Right ventricle myocardium superior (tissue), 1 donor: ENCODE measurements at regions of chr5 and their contacts with region 1.

Region 1: GRCh38 chr5:15995341-15996052 is 184.1 kb downstream of the MARCHF11 start:
- DNase-seq: no peak
- ATAC-seq: peak; percentile 82

Region 2: DNA sequence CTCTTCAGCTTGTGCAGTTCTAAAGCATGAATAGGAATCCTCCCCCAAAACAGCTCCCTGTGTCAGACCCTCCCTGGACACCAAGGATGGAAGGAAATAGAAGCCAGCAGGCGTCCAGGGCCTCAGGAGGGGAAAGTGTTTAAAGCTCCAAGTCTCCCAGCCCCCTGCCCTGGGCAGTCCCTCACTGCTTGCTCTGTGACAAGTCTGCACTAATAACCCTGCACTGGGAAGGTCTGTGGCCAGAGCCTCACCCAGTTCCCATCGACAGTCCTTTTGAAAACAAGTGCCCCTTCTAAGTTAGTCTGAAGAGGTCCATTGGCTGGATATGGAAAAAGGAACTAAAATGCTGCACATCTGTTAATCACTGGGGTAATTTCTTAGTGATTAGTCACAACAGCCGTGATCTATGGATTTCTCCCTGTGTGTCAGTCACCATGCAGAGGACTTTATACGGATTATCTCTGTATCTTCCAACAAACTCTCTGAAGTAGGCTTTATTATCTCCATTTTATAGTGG is 300.2 kb before region 1 on chr5:
- intact Hi-C with region 1: no loop called
- DNase-seq: no peak
- ATAC-seq: peak; percentile 51

Region 3: DNA sequence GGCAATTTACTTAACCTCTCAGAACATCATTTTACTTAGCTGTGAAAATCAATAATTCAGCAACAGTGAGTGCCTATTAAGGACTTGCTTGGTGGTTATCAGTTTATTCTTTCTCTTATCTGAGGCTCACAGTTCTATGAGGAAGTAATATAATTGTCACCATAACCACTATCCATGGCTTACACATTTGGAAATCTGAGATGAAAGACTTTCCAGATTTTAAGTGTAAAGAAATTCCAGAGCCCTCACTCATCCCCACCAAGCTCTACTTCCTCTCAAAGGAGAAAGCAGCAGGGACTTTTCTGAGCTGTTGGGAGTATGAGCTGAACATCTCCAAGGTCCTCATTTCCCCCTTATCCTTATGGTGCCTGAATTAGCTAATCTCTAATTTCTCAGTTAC is 174.0 kb before region 1 on chr5:
- intact Hi-C with region 1: loop called (anchors 10 kb)
- DNase-seq: no peak
- ATAC-seq: no peak

Region 4: GRCh38 chr5:16051246-16051755 is 55.8 kb after region 1 on chr5:
- intact Hi-C with region 1: no loop called
- DNase-seq: no peak
- ATAC-seq: peak; percentile 68

Region 5: GRCh38 chr5:16108418-16108817 is 112.9 kb after region 1 on chr5:
- intact Hi-C with region 1: no loop called
- DNase-seq: no peak
- ATAC-seq: no peak

Region 6: GRCh38 chr5:16152601-16153568 is 157.4 kb after region 1 on chr5:
- intact Hi-C with region 1: no loop called
- DNase-seq: no peak
- ATAC-seq: peak; percentile 37